ENCODE measurements at regions of chr20 and their contacts with region 1.

Region 1: GRCh38 chr20:1844325-1845162 is 50.7 kb upstream of the SIRPA start:
- DNase-seq: peak in 4 of 5 donors; percentile 50 to 69 (median 58)
- ATAC-seq: peak; percentile 26 to 85 (median 66)
- H3K4me3 ChIP-seq: no peak overlapping the region
- H3K27ac ChIP-seq: peak overlapping the region in 2 of 12 donors; percentile 75 to 82
- H3K4me1 ChIP-seq: peaks cover 0 to 56% (median 2%) of the 10 kb centered on the region in 12 donors
- H3K27me3 ChIP-seq: no peaks in the 10 kb centered on the region
- CTCF ChIP-seq: no peak
- POLR2A ChIP-seq: no peak

Region 2: DNA sequence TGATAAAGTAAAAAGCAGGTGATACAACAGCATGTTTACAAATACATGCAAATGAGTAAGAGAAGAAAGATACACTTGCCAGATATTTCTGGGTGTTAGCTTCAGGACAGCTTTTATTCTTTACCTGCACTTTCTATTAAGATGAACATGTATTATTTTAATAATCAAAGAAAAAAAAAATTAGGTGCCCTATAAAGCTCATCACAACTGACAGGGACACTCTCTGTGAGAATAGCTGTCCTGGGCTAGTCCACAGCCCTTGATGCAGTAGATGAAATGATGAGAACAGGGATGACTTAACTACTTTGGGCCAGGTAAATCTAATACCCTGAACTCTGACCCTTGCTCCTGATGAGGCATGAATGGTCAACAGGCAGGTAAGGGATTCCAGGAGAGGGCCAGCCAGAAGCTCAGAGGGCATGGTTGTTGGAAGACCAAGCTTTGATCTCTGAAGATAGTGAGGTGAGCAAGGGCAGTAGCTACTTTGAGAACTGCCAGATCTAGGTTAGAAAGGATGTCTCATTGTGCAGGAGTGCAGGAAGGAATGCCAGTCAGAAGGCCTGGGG is 393.5 kb before region 1 on chr20:
- intact Hi-C with region 1: no loop called
- DNase-seq: no peak
- ATAC-seq: no peak
- H3K4me3 ChIP-seq: no peak overlapping the region
- H3K27ac ChIP-seq: no peak overlapping the region
- H3K4me1 ChIP-seq: peaks cover 0 to 3% (median 0%) of the 10 kb centered on the region in 12 donors
- H3K27me3 ChIP-seq: no peaks in the 10 kb centered on the region
- CTCF ChIP-seq: no peak
- POLR2A ChIP-seq: no peak

Region 3: DNA sequence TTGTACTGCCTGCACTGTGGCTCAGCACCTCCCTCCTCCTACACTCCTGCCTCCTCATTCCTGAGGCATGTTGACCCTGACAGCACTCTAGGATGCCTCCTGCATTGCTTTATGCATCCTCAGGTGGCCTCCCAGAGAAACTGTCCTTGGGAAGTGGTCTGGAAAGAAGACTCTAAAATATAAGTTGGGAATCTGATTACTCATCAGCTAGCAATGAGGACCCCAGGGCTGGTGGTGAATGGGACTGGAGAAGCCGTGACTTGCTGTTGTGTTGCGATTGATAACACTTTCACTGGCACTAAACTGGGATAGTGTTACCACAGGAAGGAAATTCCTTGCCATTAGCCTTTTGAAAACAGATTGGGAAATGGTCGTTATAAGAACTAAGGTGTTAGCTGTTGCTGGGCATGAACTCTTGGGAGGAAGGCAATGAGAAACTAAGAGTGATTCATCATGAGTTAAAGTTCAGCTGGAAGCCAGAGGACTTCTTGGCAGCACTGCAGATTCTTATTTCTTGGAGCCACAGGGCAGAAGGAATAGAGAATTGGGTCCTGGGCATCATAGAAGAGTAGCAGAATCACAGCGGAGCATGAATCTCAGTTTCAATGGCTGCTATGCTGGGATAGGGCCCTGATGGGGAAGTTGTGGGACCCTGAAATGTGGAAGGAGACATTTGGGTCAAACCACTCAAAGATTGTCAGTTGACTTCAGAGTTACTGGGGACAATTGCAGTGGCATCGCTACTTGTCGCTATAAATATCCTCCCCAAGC is 277.0 kb before region 1 on chr20:
- intact Hi-C with region 1: no loop called
- DNase-seq: no peak
- ATAC-seq: no peak
- H3K4me3 ChIP-seq: no peak overlapping the region
- H3K27ac ChIP-seq: peak overlapping the region in 1 of 12 donors; percentile 66
- H3K4me1 ChIP-seq: peaks cover 0 to 41% (median 0%) of the 10 kb centered on the region in 12 donors
- H3K27me3 ChIP-seq: peaks cover 0 to 16% (median 0%) of the 10 kb centered on the region in 9 donors
- CTCF ChIP-seq: no peak
- POLR2A ChIP-seq: no peak

Region 4: DNA sequence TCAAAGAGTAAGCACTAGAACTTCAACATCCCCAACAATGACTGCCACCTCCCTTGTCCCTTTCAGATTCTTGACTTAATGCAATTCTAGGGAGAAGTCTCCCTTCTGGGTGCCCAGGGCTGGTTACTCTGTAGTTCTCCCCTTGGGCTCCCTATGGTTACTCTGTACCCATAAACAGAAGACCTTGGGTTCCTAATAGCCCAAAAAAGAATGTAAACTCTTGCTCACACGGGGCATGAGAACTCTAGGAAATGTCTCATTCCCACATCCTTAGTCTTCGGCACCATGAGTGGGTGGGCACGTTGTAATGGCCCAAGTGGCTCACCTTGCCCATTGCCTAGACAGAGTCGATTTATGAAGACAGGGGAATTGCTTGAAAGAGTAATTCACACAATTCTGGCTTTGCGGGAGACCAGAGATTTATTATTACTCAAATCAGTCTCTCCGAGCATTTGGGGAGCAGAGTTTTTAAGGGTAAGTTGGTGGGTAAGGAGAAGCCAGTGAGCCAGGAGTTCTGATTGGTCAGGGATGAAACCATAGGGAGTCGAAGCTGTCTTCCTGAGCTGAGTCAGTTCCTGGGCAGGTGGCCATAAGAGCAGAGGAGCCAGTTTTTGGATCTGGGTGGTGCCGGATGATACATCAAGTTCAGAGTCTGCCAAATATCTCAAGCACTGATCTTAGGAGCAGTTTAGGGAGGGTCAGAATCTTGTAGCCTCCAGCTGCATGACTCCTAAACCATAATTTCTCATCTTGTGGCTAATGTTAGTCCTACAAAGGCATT is 125.8 kb before region 1 on chr20:
- intact Hi-C with region 1: no loop called
- DNase-seq: no peak
- ATAC-seq: no peak
- H3K4me3 ChIP-seq: no peak overlapping the region
- H3K27ac ChIP-seq: no peak overlapping the region
- H3K4me1 ChIP-seq: no peaks in the 10 kb centered on the region
- H3K27me3 ChIP-seq: peaks cover 0 to 15% (median 0%) of the 10 kb centered on the region in 9 donors
- CTCF ChIP-seq: no peak
- POLR2A ChIP-seq: no peak

Region 5: DNA sequence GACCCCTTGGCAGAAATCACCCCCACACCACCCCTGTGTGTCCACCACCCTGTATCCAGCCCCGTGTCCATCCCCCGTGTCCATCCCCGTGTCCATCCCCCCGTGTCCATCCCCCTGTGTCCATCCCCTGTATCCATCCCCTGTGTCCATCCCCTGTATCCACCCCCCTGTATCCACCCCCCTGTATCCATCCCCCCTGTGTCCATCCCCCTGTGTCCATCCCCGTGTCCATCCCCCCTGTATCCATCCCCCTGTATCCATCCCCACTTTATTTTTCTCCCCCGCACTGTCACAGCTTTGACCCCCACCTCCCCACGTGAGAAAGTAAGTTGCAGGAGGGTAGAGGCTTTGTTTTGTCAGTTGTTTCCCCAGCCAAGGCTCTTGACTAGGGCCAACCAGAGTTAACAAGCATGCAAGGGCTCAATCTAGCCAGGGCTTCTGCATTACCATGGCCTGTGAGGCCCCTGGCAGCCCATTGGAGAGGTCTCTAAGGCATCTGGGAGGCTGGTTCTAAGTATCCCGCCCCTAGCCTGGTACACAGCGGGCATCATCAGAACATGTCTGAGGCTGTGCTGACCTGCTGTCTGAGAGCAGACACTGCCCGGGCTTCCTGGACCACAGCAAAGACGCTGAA is 32.5 kb after region 1 on chr20:
- intact Hi-C with region 1: loop called in 1 of 10 experiments (anchors 5 kb)
- DNase-seq: no peak
- ATAC-seq: peak in 3 of 4 donors; percentile 15 to 34 (median 23)
- H3K4me3 ChIP-seq: no peak overlapping the region
- H3K27ac ChIP-seq: no peak overlapping the region
- H3K4me1 ChIP-seq: peaks cover 0 to 30% (median 11%) of the 10 kb centered on the region in 12 donors
- H3K27me3 ChIP-seq: peaks cover 0 to 8% (median 0%) of the 10 kb centered on the region in 9 donors
- CTCF ChIP-seq: no peak
- POLR2A ChIP-seq: no peak